HepG2 (cell line): ENCODE measurements at regions of chr1 and their contacts with region 1.

Region 1: GRCh38 chr1:151340870-151341754 is 5.9 kb downstream of the RFX5 start:
- DNase-seq: peak; percentile 85
- ATAC-seq: peak; percentile 88
- H3K4me3 ChIP-seq: no peak overlapping the region
- H3K27ac ChIP-seq: no peak overlapping the region
- H3K4me1 ChIP-seq: peaks cover 6% of the 10 kb centered on the region
- H3K27me3 ChIP-seq: no peaks in the 10 kb centered on the region
- CTCF ChIP-seq: peak; percentile 87
- EP300 ChIP-seq: no peak
- POLR2A ChIP-seq: 0 out of 4 replicates have a peak, but pooled peaks of 1 of the 2 experiments have one; percentile 26
- RAD21 ChIP-seq: peak; percentile 59; the same call in 1 of the 2 replicates

Region 2: GRCh38 chr1:151294742-151295462 is 46.2 kb before region 1 on chr1:
- CTCF ChIA-PET with region 1: interaction called, 56 read pairs
- POLR2A ChIA-PET with region 1: no interaction called
- in situ Hi-C with region 1: loop called (anchors 5 kb)
- intact Hi-C with region 1: no loop called
- DNase-seq: no peak
- ATAC-seq: no peak
- H3K4me3 ChIP-seq: no peak overlapping the region
- H3K27ac ChIP-seq: no peak overlapping the region
- H3K4me1 ChIP-seq: no peaks in the 10 kb centered on the region
- H3K27me3 ChIP-seq: no peaks in the 10 kb centered on the region
- CTCF ChIP-seq: no peak
- EP300 ChIP-seq: no peak
- POLR2A ChIP-seq: no peak
- RAD21 ChIP-seq: no peak

Region 3: GRCh38 chr1:151327223-151327902 is 13.7 kb before region 1 on chr1 and contains the start of gene PI4KB:
- CTCF ChIA-PET with region 1: no interaction called
- POLR2A ChIA-PET with region 1: interaction called, 10 read pairs
- in situ Hi-C with region 1: no loop called
- intact Hi-C with region 1: no loop called
- DNase-seq: peak; percentile 97
- ATAC-seq: peak; percentile 92
- H3K4me3 ChIP-seq: peak within 1 kb of the TSS; percentile 78 to 82 (median 79)
- H3K27ac ChIP-seq: peak within 1 kb of the TSS; percentile 93
- H3K4me1 ChIP-seq: peaks cover 33% of the 10 kb centered on the region
- H3K27me3 ChIP-seq: no peaks in the 10 kb centered on the region; a peak in 1 of 5 replicates
- CTCF ChIP-seq: no peak
- EP300 ChIP-seq: no peak
- POLR2A ChIP-seq: peak; percentile 58 to 69
- RAD21 ChIP-seq: no peak
- total RNA-seq, gene PI4KB: 18.6 and 19.5 TPM in 2 replicates

Region 4: GRCh38 chr1:151399890-151400495 is 58.9 kb after region 1 on chr1:
- CTCF ChIA-PET with region 1: no interaction called
- POLR2A ChIA-PET with region 1: interaction called, 6 read pairs
- in situ Hi-C with region 1: no loop called
- intact Hi-C with region 1: loop called (anchors 2 kb)
- DNase-seq: no peak
- ATAC-seq: peak; percentile 30
- H3K4me3 ChIP-seq: peak overlapping the region; percentile 81 to 92 (median 86)
- H3K27ac ChIP-seq: peak overlapping the region; percentile 66
- H3K4me1 ChIP-seq: peaks cover 43% of the 10 kb centered on the region
- H3K27me3 ChIP-seq: no peaks in the 10 kb centered on the region; a peak in 1 of 5 replicates
- CTCF ChIP-seq: no peak
- EP300 ChIP-seq: no peak
- POLR2A ChIP-seq: no peak
- RAD21 ChIP-seq: no peak

Region 5: DNA sequence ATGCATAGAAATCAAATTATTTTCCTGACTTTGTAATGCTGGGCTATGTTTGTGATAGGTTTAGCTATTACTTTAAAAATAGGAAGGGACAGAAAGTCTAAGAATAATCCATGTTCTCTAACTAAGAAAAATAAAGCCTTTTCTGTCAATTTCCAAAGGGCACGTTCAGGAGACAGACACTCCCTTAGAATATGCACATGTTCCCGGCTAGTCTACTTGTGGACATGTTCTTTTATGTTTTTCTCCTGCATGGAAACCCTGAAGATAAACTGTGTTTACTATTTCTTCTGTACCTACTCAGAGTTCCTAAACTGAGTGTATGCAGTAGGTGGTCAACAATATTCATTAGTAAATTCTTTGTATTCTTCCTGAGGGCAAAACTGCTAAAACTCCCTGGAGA is 70.8 kb after region 1 on chr1:
- CTCF ChIA-PET with region 1: no interaction called
- POLR2A ChIA-PET with region 1: no interaction called
- in situ Hi-C with region 1: no loop called
- intact Hi-C with region 1: no loop called
- DNase-seq: no peak
- ATAC-seq: no peak
- H3K4me3 ChIP-seq: no peak overlapping the region
- H3K27ac ChIP-seq: no peak overlapping the region
- H3K4me1 ChIP-seq: no peaks in the 10 kb centered on the region
- H3K27me3 ChIP-seq: no peaks in the 10 kb centered on the region
- CTCF ChIP-seq: no peak
- EP300 ChIP-seq: no peak
- POLR2A ChIP-seq: no peak
- RAD21 ChIP-seq: no peak